MCF 10A (cell line): ENCODE measurements at regions of chr6 and their contacts with region 1.

Region 1: GRCh38 chr6:42217519-42218367 is at the start of gene MRPS10:
- DNase-seq: peak; percentile 95
- H3K4me3 Mint-ChIP-seq: peak within 1 kb of the TSS; percentile 98
- H3K27ac Mint-ChIP-seq: peak within 1 kb of the TSS; percentile 98
- H3K4me1 Mint-ChIP-seq: peaks cover 10% of the 10 kb centered on the region
- H3K27me3 Mint-ChIP-seq: no peaks in the 10 kb centered on the region
- CTCF ChIP-seq: no peak
- total RNA-seq, gene MRPS10: 62.9 and 67.3 TPM in 2 replicates

Region 2: DNA sequence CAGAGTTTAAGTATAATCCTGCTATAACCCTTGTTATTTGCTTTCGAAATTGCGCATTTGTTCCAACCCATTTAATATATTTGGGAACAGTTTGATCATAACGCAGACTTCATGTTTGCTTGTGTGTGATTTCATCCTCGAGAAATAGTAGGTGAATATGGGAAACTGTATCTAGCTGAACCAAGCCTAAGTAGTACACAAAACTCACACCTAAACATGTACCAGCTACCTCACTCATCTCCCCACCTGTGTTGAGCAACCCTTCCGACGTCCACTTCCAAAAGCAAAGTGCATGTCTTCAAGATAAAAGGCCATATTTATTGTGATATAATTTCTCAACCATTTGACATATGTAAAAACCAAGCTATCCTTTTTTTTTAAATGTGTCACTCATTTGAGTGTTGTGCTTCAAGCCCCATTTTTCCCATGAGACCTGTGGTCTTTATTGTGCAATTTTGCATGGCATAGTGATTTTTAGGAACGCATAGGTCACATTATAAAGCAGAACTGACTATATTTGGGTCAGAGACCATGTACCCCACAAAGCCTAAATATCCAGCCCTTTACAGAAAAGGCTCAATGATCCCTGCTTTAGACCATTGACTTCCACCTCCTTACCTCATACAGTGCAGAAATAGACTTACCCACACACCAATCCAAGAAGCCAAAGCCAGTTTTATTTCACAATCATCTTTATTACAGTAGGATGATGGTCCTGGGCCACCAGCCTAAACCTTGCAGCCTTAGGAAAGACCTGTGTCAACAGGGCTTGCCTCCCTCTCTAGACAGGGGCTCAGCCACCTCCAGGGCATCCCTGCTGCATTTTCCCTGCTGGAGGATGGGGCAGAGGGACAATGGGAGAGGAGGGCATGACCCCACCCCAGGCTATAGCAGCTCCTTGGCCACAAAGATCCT is 283.2 kb before region 1 on chr6:
- CTCF ChIA-PET with region 1: no interaction called
- POLR2A ChIA-PET with region 1: no interaction called
- intact Hi-C with region 1: no loop called
- DNase-seq: peak; percentile 38
- H3K4me3 Mint-ChIP-seq: no peak overlapping the region
- H3K27ac Mint-ChIP-seq: no peak overlapping the region
- H3K4me1 Mint-ChIP-seq: peaks cover 19% of the 10 kb centered on the region
- H3K27me3 Mint-ChIP-seq: no peaks in the 10 kb centered on the region
- CTCF ChIP-seq: no peak

Region 3: GRCh38 chr6:42075159-42075838 is 142.4 kb before region 1 on chr6:
- CTCF ChIA-PET with region 1: interaction called, 68 read pairs
- POLR2A ChIA-PET with region 1: interaction called, 7 read pairs
- intact Hi-C with region 1: loop called (anchors 1 kb)
- DNase-seq: peak; percentile 69
- H3K4me3 Mint-ChIP-seq: no peak overlapping the region
- H3K27ac Mint-ChIP-seq: no peak overlapping the region
- H3K4me1 Mint-ChIP-seq: no peaks in the 10 kb centered on the region
- H3K27me3 Mint-ChIP-seq: no peaks in the 10 kb centered on the region
- CTCF ChIP-seq: peak; percentile 82

Region 4: GRCh38 chr6:42166444-42167141 is 51.1 kb before region 1 on chr6:
- CTCF ChIA-PET with region 1: interaction called, 27 read pairs
- POLR2A ChIA-PET with region 1: interaction called, 5 read pairs
- intact Hi-C with region 1: loop called (anchors 1 kb)
- DNase-seq: peak; percentile 85
- H3K4me3 Mint-ChIP-seq: no peak overlapping the region
- H3K27ac Mint-ChIP-seq: peak overlapping the region; percentile 22
- H3K4me1 Mint-ChIP-seq: peaks cover 8% of the 10 kb centered on the region
- H3K27me3 Mint-ChIP-seq: no peaks in the 10 kb centered on the region
- CTCF ChIP-seq: peak; percentile 97

Region 5: DNA sequence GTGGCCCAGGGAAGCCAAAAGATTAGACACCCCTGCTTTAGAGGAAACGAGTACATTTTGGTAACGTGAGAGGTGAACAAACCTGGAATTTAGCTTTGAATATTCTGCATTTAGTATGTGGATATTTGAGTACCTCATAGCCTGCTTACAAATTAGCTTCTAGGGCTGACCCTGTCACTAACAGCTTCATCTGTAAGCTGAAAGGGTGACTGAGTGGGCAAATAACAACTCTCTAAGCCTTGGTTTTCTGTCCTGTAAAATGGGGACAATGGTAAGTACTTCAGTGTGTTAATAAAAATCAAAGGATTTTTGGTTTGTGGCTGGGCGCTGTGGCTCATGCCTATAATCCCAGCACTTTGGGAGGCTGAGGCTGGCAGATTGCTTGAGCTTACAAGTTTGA is 14.6 kb before region 1 on chr6:
- CTCF ChIA-PET with region 1: interaction called, 6 read pairs
- POLR2A ChIA-PET with region 1: interaction called, 10 read pairs
- intact Hi-C with region 1: no loop called
- DNase-seq: no peak
- H3K4me3 Mint-ChIP-seq: no peak overlapping the region
- H3K27ac Mint-ChIP-seq: no peak overlapping the region
- H3K4me1 Mint-ChIP-seq: peaks cover 21% of the 10 kb centered on the region
- H3K27me3 Mint-ChIP-seq: no peaks in the 10 kb centered on the region
- CTCF ChIP-seq: no peak

Region 6: GRCh38 chr6:42239351-42240055 is 21.8 kb after region 1 on chr6:
- CTCF ChIA-PET with region 1: interaction called, 7 read pairs
- POLR2A ChIA-PET with region 1: interaction called, 12 read pairs
- intact Hi-C with region 1: no loop called
- DNase-seq: peak; percentile 85
- H3K4me3 Mint-ChIP-seq: peak overlapping the region; percentile 24
- H3K27ac Mint-ChIP-seq: peak overlapping the region; percentile 89
- H3K4me1 Mint-ChIP-seq: peaks cover 23% of the 10 kb centered on the region
- H3K27me3 Mint-ChIP-seq: no peaks in the 10 kb centered on the region
- CTCF ChIP-seq: no peak

Region 7: DNA sequence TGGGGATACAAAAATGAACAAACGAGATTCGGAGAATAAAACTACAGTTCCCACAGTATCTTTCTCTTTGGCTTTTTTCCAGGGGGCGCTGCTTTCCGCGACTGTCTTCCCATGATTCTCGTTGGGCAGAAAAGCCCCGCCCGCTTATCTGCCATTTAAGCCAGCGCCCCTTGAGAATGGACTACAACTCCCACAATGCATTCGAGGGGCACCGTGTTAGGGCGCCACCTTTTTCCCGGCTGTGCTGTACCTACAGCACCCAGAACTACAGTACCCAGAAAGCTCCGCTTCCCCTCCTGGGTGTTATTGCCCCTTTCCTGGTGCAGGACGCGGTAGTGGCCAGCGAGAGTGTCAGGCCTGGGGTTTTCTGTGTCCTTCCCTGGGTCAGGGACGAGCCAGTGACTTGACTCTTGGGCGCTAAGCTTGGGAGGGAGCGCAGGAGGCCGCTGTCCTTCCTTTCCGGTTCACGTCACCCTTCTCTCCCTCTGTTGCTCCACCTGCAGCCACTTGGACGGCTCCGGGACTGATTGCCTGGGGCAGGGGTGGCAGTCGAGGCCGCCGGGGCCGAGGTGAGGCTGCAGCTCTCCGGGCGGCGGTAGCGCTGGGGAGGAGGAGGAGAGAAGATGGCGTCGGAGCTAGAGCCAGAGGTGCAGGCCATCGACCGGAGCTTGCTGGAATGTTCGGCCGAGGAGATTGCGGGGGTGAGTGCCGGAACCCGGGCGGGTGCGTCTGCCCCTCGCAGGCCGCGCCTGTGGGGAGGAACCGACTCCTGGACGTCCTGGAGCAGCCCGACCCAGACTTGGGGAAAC is 346.2 kb after region 1 on chr6 and contains the start of gene UBR2:
- CTCF ChIA-PET with region 1: interaction called, 3 read pairs
- POLR2A ChIA-PET with region 1: interaction called, 17 read pairs
- intact Hi-C with region 1: no loop called
- DNase-seq: peak; percentile 99
- H3K4me3 Mint-ChIP-seq: peak within 1 kb of the TSS; percentile 79
- H3K27ac Mint-ChIP-seq: peak within 1 kb of the TSS; percentile 81
- H3K4me1 Mint-ChIP-seq: peaks cover 18% of the 10 kb centered on the region
- H3K27me3 Mint-ChIP-seq: no peaks in the 10 kb centered on the region
- CTCF ChIP-seq: no peak
- total RNA-seq, gene UBR2: 20.1 and 23.2 TPM in 2 replicates